ENCODE measurements at regions of chr2 and their contacts with region 1.

Region 1: DNA sequence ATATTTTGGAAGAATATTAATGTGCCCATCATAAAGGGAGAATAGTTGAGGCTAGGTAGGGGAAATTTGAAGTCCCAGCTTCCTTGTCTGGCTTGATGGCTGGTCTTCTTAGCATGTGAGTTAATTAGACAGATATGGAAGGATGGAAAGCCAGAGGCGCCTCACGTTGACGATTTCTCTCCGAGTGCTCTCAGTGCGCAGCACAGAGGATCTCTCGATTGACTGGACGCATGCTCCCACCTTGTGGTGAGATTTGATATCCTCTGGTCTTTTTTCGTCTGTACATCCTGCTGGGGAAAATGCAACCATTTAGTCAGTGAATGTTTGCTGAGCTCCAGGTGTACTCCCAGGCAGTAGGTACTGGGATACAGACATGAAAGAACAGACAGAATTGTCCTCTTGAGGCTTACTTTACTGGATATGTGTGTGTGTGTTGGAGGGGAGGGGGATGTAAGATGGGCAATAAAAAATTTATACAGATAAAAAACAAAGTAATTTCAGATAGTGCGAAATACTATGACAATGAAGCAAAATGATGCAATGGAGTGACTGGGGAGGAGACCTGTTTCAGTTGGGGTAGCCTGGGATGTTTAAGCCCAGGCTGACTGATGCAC is 66.9 kb upstream of the ZNG1B start:
- DNase-seq: peak; percentile 80
- H3K4me3 Mint-ChIP-seq: no peak overlapping the region
- H3K27ac Mint-ChIP-seq: no peak overlapping the region
- H3K4me1 Mint-ChIP-seq: peaks cover 14% of the 10 kb centered on the region
- H3K27me3 Mint-ChIP-seq: peaks cover 13% of the 10 kb centered on the region

Region 2: GRCh38 chr2:112749755-112750559 is 620.6 kb before region 1 on chr2:
- CTCF ChIA-PET with region 1: no interaction called
- POLR2A ChIA-PET with region 1: no interaction called
- DNase-seq: peak; percentile 88
- H3K4me3 Mint-ChIP-seq: no peak overlapping the region
- H3K27ac Mint-ChIP-seq: peak overlapping the region; percentile 71
- H3K4me1 Mint-ChIP-seq: peaks cover 46% of the 10 kb centered on the region
- H3K27me3 Mint-ChIP-seq: no peaks in the 10 kb centered on the region

Region 3: GRCh38 chr2:113203901-113204519 is 166.6 kb before region 1 on chr2:
- CTCF ChIA-PET with region 1: interaction called, 10 read pairs
- POLR2A ChIA-PET with region 1: no interaction called
- DNase-seq: peak; percentile 80
- H3K4me3 Mint-ChIP-seq: no peak overlapping the region
- H3K27ac Mint-ChIP-seq: peak overlapping the region; percentile 65
- H3K4me1 Mint-ChIP-seq: peaks cover 12% of the 10 kb centered on the region
- H3K27me3 Mint-ChIP-seq: no peaks in the 10 kb centered on the region

Region 4: GRCh38 chr2:113382476-113382875 is 11.9 kb after region 1 on chr2:
- CTCF ChIA-PET with region 1: no interaction called
- POLR2A ChIA-PET with region 1: no interaction called
- DNase-seq: no peak
- H3K4me3 Mint-ChIP-seq: no peak overlapping the region
- H3K27ac Mint-ChIP-seq: no peak overlapping the region
- H3K4me1 Mint-ChIP-seq: no peaks in the 10 kb centered on the region
- H3K27me3 Mint-ChIP-seq: peaks cover 42% of the 10 kb centered on the region

Measured in activated CD4-positive, alpha-beta T cell treated with anti-CD3 and anti-CD28 coated beads, Interleukin-2, amount 10 ng/mL, durations not matched to agents 7 days and 5 days (primary cell).